OCI-LY7 (cell line): ENCODE measurements at regions of chr3 and their contacts with region 1.

Region 1: DNA sequence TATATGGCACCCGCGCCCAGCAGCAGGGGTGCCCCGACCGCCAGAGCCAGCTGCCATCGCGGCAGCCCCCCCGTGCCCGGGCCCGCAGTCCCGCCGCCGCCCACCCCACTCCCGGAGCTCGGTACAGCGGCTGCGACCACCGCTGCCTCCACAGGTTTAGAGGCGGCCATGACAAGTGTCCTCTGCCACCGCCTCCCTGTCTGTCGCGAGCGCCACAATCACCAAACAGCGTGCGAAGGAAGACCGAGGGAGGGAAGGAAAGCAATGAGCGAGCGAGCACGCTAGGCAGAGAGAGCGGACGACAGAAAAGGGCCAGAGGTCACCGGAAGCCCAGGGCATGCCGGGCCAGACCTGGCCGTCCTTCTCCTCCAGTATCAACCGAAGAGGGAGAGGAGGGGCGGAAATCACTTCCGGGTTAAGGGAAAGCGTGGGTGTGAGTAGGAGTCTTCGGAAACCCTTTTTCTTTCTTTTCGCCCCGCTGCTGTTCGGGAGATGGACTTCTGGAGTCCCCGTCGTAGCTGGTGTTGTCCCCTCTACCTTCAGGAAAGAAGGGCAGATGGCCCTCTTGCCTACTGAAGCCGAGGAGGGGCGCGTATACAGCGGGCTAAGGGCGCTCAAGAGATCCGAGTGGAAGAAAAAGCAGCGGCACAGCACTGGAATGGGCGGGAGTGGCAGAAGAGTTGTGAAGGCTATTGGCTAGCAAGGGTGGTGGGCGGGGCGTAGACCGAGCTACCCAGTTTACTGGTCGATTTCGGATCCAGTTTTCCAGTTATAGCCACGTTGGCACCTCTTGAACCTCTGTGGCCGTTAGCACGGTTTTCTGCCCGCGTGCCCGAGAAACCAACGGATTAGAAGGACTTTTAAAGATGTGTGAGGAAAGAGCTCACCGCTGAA is at the starts of genes LNP1 and TOMM70:
- DNase-seq: peak; percentile 97
- H3K4me3 ChIP-seq: peak within 1 kb of the TSS; percentile 93
- H3K27ac ChIP-seq: peak within 1 kb of the TSS; percentile 81
- H3K4me1 ChIP-seq: peaks cover 27% of the 10 kb centered on the region
- CTCF ChIP-seq: no peak
- total RNA-seq, gene LNP1: 8.8 and 8.9 TPM in 2 replicates
- total RNA-seq, gene TOMM70: 41.2 and 45.7 TPM in 2 replicates

Region 2: GRCh38 chr3:100184948-100185570 is 216.0 kb before region 1 on chr3:
- CTCF ChIA-PET with region 1: no interaction called
- POLR2A ChIA-PET with region 1: interaction called, 10 read pairs
- intact Hi-C with region 1: no loop called
- DNase-seq: no peak
- H3K4me3 ChIP-seq: no peak overlapping the region
- H3K27ac ChIP-seq: no peak overlapping the region
- H3K4me1 ChIP-seq: no peaks in the 10 kb centered on the region
- CTCF ChIP-seq: no peak

Region 3: DNA sequence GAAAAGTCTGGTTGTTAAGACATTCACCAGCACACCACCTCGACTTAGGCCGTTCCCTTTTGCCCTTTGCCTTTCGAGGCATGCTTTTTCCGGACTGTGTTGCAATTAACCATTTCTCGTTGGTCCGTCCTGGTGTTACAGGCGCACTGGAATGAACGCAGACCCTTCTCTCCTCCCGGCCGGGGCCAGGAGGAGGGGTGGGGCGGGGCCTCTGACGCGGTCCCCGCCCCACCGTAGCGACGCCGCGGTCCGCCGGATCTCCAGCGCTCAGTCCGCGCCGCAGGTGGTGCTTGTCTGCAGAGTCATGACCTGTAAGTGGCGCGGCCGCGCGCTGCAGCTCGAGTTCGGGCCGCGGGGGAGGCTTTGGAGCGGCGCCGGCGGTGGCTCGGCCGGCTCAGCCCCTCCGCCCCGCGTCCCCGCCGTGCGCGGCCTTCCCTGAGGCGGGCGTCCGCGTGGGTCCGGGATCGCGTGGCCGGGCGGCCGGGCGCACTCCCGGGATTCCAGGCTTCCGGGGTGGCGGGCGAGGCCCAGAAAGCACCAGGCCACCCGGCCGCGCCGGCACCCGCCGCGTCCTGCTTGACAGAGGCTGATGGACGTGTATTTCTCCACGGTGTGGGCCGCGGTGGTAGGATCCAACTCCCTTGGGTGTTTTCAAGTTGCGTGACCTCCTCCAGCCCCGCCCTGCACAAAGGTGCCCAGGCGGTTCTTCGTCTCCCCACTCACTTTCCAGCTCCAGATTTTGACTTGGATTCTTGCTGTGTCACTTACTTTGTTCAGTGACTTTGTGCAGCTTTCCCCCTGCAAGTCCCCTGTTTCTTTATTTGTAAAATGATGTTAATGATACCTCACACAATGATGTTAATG is 66.3 kb before region 1 on chr3 and contains the start of gene NIT2:
- CTCF ChIA-PET with region 1: interaction called, 4 read pairs
- POLR2A ChIA-PET with region 1: interaction called, 12 read pairs
- intact Hi-C with region 1: loop called (anchors 2 kb)
- DNase-seq: peak; percentile 91
- H3K4me3 ChIP-seq: peak within 1 kb of the TSS; percentile 85
- H3K27ac ChIP-seq: peak within 1 kb of the TSS; percentile 31
- H3K4me1 ChIP-seq: peaks cover 9% of the 10 kb centered on the region
- CTCF ChIP-seq: no peak
- total RNA-seq, gene NIT2: 25.7 and 34.6 TPM in 2 replicates

Region 4: DNA sequence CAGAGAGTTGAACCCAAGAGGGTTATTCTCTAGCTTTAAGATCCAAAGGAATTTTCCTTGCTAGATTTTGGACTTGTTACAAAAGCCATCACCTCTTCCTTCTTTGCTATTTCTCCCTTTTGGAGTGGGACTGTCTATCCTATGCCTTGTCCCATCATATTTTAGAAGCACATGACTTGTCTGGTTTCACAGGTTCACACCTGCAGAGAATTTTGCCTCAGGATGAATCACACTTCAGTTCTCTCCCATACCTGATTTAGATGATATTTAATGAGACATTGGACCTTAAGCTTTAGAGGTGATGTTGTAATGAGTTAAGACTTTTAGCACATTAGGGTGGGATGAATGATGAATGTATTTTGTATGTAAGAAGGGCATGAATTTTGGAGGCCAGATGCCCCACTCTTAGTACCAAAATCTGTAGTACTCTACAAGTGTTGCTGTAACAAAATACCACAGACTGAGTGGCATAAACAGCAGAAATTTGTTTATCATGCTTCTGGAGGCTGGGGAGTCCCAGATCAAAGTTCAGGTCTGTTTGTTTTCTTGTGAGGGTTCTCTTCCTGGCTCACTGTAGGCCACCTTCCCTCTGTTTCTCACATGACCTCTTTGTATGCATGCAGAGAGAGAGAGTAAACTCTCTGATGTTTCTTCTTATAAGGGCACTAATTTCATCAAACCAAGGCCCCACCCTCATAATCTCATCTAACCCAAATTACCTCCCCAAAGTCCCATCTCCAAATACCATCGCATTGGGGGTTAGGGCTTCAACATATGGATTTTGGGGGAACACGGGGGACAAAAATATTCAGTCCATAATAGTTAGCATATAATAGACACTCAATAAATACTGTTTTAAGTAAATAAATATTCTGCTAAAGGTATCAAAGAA is 10.3 kb after region 1 on chr3:
- CTCF ChIA-PET with region 1: no interaction called
- POLR2A ChIA-PET with region 1: interaction called, 10 read pairs
- intact Hi-C with region 1: no loop called
- DNase-seq: no peak
- H3K4me3 ChIP-seq: no peak overlapping the region
- H3K27ac ChIP-seq: no peak overlapping the region
- H3K4me1 ChIP-seq: no peaks in the 10 kb centered on the region
- CTCF ChIP-seq: no peak

Region 5: GRCh38 chr3:100516838-100517237 is 115.8 kb after region 1 on chr3:
- CTCF ChIA-PET with region 1: no interaction called
- POLR2A ChIA-PET with region 1: no interaction called
- intact Hi-C with region 1: no loop called
- DNase-seq: no peak
- H3K4me3 ChIP-seq: no peak overlapping the region
- H3K27ac ChIP-seq: no peak overlapping the region
- H3K4me1 ChIP-seq: no peaks in the 10 kb centered on the region
- CTCF ChIP-seq: no peak

Region 6: GRCh38 chr3:100708967-100709841 is 308.2 kb after region 1 on chr3 and contains the start of gene TFG:
- CTCF ChIA-PET with region 1: no interaction called
- POLR2A ChIA-PET with region 1: interaction called, 3 read pairs
- intact Hi-C with region 1: loop called (anchors 5 kb)
- DNase-seq: peak; percentile 98
- H3K4me3 ChIP-seq: peak within 1 kb of the TSS; percentile 91
- H3K27ac ChIP-seq: peak within 1 kb of the TSS; percentile 60
- H3K4me1 ChIP-seq: peaks cover 14% of the 10 kb centered on the region
- CTCF ChIP-seq: no peak
- total RNA-seq, gene TFG: 28.1 and 29.4 TPM in 2 replicates